ENCODE measurements at regions of chr5 and their contacts with region 1.

Region 1: DNA sequence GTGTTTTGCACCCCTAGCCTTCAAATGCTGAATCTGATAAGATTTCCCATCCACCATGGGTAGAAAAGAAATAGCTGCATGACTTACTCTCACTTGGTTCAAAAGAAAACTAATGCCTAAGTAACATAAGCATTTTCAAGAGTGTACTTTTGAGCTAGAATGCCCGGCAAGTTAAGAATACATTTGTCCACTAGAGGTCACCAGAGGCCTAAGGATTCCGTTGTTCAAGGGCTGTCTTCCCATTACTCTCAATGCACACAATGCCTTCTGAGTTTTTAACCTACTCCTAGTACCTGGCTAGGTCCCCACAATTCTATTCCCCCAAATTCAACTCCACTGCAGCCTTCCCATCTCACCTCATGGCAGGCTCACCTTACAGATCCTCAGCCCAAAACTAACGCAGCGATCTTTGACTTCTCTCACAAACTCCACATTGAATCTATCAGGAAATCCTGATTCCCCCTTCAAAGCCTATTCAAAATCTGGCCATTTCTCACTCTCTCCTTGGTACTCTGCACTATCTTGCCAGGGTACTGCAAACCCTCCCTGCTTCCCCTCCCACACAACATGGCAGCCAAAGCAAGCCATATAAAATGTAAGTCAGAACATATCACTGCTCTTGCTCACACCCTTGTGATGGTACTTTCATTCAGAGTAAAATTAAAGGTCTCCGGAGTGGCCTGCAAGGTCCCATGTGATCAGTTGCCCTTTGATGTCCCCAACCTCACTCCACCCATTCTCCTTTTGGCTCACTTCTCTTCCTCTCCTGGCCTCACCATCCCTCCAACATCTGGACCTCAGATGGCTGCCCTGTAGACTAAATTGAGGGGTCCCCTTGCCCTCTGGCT is 13.4 kb downstream of the OXCT1 start:
- DNase-seq: peak; percentile 42 to 69
- ATAC-seq: peak; percentile 86 to 97
- H3K4me3 ChIP-seq: no peak overlapping the region
- H3K27ac ChIP-seq: no peak overlapping the region
- H3K4me1 ChIP-seq: no peaks in the 10 kb centered on the region
- CTCF ChIP-seq: peak; percentile 86
- EP300 ChIP-seq: no peak
- POLR2A ChIP-seq: no peak
- RAD21 ChIP-seq: peak; percentile 86 to 92

Region 2: DNA sequence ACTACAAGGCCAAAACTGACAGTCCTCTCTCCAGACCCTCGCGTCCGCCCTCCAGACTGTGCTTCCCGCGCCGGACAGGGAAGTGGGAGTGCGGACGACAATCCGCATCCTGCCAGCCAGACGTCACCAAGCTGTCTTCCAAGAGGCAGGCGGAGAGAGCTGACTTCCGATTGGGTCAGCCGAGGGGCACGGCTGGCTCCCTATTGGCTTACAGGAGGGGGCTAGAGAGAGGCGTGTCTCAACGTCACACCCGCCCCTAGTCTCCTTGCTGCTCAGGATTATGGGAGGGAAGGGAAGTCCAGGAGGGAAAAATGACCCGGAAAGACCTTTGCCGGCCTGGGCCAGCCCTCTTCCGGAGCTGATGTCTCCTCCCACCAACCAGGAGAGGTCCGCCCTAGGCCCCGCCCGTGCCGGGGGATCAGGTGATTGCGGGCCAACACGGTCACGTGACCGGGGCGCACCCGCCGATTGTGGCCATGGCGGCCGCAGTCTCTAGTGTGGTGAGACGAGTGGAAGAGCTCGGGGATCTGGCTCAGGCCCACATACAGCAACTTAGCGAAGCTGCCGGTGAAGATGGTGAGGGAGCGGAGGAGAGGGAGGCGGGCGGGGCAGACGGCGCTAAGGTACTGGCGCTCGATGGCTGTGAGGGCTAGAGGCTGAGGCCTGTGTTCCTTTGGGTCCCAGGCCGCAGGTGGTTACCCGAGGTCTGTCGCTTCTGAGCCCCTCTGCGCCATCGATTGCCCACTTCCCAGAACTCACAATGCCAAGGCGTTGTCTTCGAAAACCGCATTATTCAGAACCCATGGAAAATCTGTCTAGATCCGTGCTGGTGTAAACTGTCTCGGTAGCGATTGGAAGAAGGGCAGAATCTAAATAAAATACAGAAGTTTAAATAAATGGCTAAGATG is 47.3 kb after region 1 on chr5 and contains the start of gene RIMOC1:
- CTCF ChIA-PET with region 1: no interaction called
- POLR2A ChIA-PET with region 1: no interaction called
- DNase-seq: peak; percentile 91 to 99
- ATAC-seq: peak; percentile 99 to 100
- H3K4me3 ChIP-seq: peak within 1 kb of the TSS; percentile 90
- H3K27ac ChIP-seq: peak within 1 kb of the TSS; percentile 81 to 90
- H3K4me1 ChIP-seq: peaks cover 14% of the 10 kb centered on the region
- CTCF ChIP-seq: no peak
- EP300 ChIP-seq: no peak; a peak in 1 of 5 replicates
- POLR2A ChIP-seq: peak; percentile 83
- RAD21 ChIP-seq: no peak
- polyA plus RNA-seq, gene RIMOC1: 25.2 and 38.4 TPM in 2 replicates

Region 3: DNA sequence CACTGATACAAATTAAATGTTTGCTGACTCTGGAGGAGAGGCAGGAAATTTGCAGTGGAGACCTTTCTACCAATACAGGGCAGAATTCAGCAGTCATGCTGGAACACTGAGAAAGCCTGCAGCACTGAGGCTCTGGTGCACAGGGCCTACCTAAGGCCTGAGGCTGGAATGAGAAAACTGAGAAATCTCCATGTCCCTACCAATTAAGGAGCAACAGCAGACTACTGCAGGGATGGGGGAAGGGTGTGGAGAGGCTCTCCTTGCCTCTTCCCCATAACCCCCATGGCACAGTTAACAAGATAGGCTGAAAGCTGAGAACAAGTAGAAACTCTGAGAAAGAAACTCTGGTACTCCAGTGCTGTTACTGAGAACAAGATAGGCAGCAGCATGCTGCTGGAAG is 78.7 kb after region 1 on chr5:
- CTCF ChIA-PET with region 1: no interaction called
- POLR2A ChIA-PET with region 1: no interaction called
- DNase-seq: no peak
- ATAC-seq: no peak
- H3K4me3 ChIP-seq: no peak overlapping the region
- H3K27ac ChIP-seq: no peak overlapping the region
- H3K4me1 ChIP-seq: no peaks in the 10 kb centered on the region
- CTCF ChIP-seq: no peak
- EP300 ChIP-seq: no peak
- POLR2A ChIP-seq: no peak
- RAD21 ChIP-seq: no peak

Region 4: GRCh38 chr5:42057254-42057690 is 200.4 kb after region 1 on chr5:
- CTCF ChIA-PET with region 1: interaction called, 74 read pairs
- POLR2A ChIA-PET with region 1: no interaction called
- DNase-seq: peak; percentile 23 to 48
- ATAC-seq: peak; percentile 73 to 87; a peak in 5 of 6 replicates
- H3K4me3 ChIP-seq: no peak overlapping the region
- H3K27ac ChIP-seq: no peak overlapping the region
- H3K4me1 ChIP-seq: no peaks in the 10 kb centered on the region
- CTCF ChIP-seq: peak; percentile 61
- EP300 ChIP-seq: no peak
- POLR2A ChIP-seq: no peak
- RAD21 ChIP-seq: peak; percentile 52 to 57

Measured in A549 (cell line).